Testis (tissue), 5 donors: ENCODE measurements at regions of chr7 and their contacts with region 1.

Region 1: GRCh38 chr7:95871078-95871782 is 98.9 kb downstream of the DYNC1I1 start:
- DNase-seq: peak; percentile 59
- H3K4me3 ChIP-seq: no peak overlapping the region
- H3K27ac ChIP-seq: no peak overlapping the region
- H3K4me1 ChIP-seq: peaks cover 5% of the 10 kb centered on the region
- H3K27me3 ChIP-seq: no peaks in the 10 kb centered on the region
- CTCF ChIP-seq: peak in 2 of 3 experiments; percentile 56 to 67
- POLR2A ChIP-seq: no peak

Region 2: DNA sequence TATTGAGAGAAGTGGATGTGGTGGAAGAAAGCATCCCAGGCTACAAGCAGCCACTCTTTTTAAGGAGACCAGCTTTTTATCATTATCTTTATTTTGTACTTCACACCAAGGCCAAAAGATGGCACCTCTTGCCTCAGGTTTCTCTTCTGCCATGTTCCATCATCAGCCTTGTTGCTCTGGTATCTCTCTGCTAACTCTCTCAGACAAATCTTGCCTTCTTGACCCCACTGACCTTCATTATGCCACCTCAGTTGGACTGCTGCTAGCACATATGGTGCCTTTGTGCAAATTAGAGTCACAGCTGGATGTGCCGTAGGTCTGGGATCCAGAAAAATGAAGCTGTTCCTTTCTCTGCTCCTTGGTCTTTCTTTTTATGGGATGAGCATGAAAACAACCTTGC is 146.0 kb before region 1 on chr7:
- intact Hi-C with region 1: loop called (anchors 5 kb)
- DNase-seq: no peak
- H3K4me3 ChIP-seq: no peak overlapping the region
- H3K27ac ChIP-seq: no peak overlapping the region
- H3K4me1 ChIP-seq: no peaks in the 10 kb centered on the region
- H3K27me3 ChIP-seq: no peaks in the 10 kb centered on the region
- CTCF ChIP-seq: no peak
- POLR2A ChIP-seq: no peak